ENCODE measurements at regions of chr1 and their contacts with region 1.

Region 1: GRCh38 chr1:46026531-46026930 is 105.9 kb downstream of the PIK3R3 start:
- DNase-seq: peak in 4 of 5 donors; percentile 60 to 66 (median 63)
- ATAC-seq: peak; percentile 72 to 81 (median 80)
- H3K4me3 ChIP-seq: no peak overlapping the region
- H3K27ac ChIP-seq: peak overlapping the region; percentile 64 to 94 (median 82)
- H3K4me1 ChIP-seq: peaks cover 0 to 45% (median 19%) of the 10 kb centered on the region in 12 donors
- H3K27me3 ChIP-seq: no peaks in the 10 kb centered on the region
- CTCF ChIP-seq: no peak
- POLR2A ChIP-seq: no peak

Region 2: GRCh38 chr1:45913183-45913683 is 113.3 kb before region 1 on chr1:
- intact Hi-C with region 1: loop called in 2 of 10 experiments (anchors 2 to 10 kb)
- DNase-seq: peak in 4 of 5 donors; percentile 78 to 89 (median 80)
- ATAC-seq: peak; percentile 93 to 96 (median 95)
- H3K4me3 ChIP-seq: peak overlapping the region in 9 of 12 donors; percentile 31 to 52 (median 40)
- H3K27ac ChIP-seq: peak overlapping the region; percentile 78 to 94 (median 85)
- H3K4me1 ChIP-seq: peaks cover 0 to 28% (median 7%) of the 10 kb centered on the region in 12 donors
- H3K27me3 ChIP-seq: no peaks in the 10 kb centered on the region
- CTCF ChIP-seq: peak in 2 of 12 donors; percentile 12 to 16
- POLR2A ChIP-seq: no peak

Region 3: GRCh38 chr1:45929257-45929687 is 97.3 kb before region 1 on chr1:
- intact Hi-C with region 1: loop called in 3 of 10 experiments (anchors 5 to 10 kb)
- DNase-seq: no peak
- ATAC-seq: peak in 3 of 4 donors; percentile 38 to 42 (median 41)
- H3K4me3 ChIP-seq: no peak overlapping the region
- H3K27ac ChIP-seq: no peak overlapping the region
- H3K4me1 ChIP-seq: peaks cover 0 to 33% (median 13%) of the 10 kb centered on the region in 12 donors
- H3K27me3 ChIP-seq: no peaks in the 10 kb centered on the region
- CTCF ChIP-seq: no peak
- POLR2A ChIP-seq: no peak

Region 4: GRCh38 chr1:46084553-46085451 is 58.3 kb after region 1 on chr1:
- intact Hi-C with region 1: no loop called
- DNase-seq: no peak
- ATAC-seq: peak in 3 of 4 donors; percentile 60 to 70 (median 65)
- H3K4me3 ChIP-seq: no peak overlapping the region
- H3K27ac ChIP-seq: peak overlapping the region in 2 of 12 donors; percentile 2 to 30
- H3K4me1 ChIP-seq: peaks cover 0 to 35% (median 15%) of the 10 kb centered on the region in 12 donors
- H3K27me3 ChIP-seq: no peaks in the 10 kb centered on the region
- CTCF ChIP-seq: no peak
- POLR2A ChIP-seq: no peak